ENCODE measurements at regions of chr11 and their contacts with region 1.

Region 1: GRCh38 chr11:72085621-72086351 is 5.1 kb downstream of the LRRC51 start:
- DNase-seq: peak in 3 of 4 experiments; percentile 11 to 33 (median 30)
- ATAC-seq: no peak
- H3K4me3 ChIP-seq: no peak overlapping the region
- H3K27ac ChIP-seq: no peak overlapping the region
- H3K4me1 ChIP-seq: peaks cover 6 to 12% of the 10 kb centered on the region in 2 experiments; a peak in 3 of 5 replicates
- H3K27me3 ChIP-seq: no peaks in the 10 kb centered on the region
- CTCF ChIP-seq: no peak
- EP300 ChIP-seq: no peak
- POLR2A ChIP-seq: no peak
- RAD21 ChIP-seq: no peak

Region 2: GRCh38 chr11:72004936-72005500 is 80.8 kb before region 1 on chr11:
- CTCF ChIA-PET with region 1: no interaction called
- POLR2A ChIA-PET with region 1: no interaction called
- in situ Hi-C with region 1: no loop called
- intact Hi-C with region 1: no loop called
- DNase-seq: no peak
- ATAC-seq: no peak
- H3K4me3 ChIP-seq: no peak overlapping the region
- H3K27ac ChIP-seq: no peak overlapping the region
- H3K4me1 ChIP-seq: peaks cover 7 to 27% of the 10 kb centered on the region in 2 experiments; a peak in 4 of 5 replicates
- H3K27me3 ChIP-seq: no peaks in the 10 kb centered on the region
- CTCF ChIP-seq: no peak
- EP300 ChIP-seq: no peak
- POLR2A ChIP-seq: peak; percentile 12; the same call in 1 of the 2 replicates
- RAD21 ChIP-seq: no peak

Region 3: GRCh38 chr11:72102946-72103753 is 17.4 kb after region 1 on chr11 and contains the start of gene LAMTOR1:
- CTCF ChIA-PET with region 1: no interaction called
- POLR2A ChIA-PET with region 1: interaction called, 21 read pairs
- in situ Hi-C with region 1: no loop called
- intact Hi-C with region 1: loop called (anchors 1 kb)
- DNase-seq: peak; percentile 96 to 100 (median 96)
- ATAC-seq: peak; percentile 96
- H3K4me3 ChIP-seq: peak within 1 kb of the TSS; percentile 77
- H3K27ac ChIP-seq: peak within 1 kb of the TSS; percentile 96
- H3K4me1 ChIP-seq: peaks cover 12 to 39% of the 10 kb centered on the region in 2 experiments
- H3K27me3 ChIP-seq: no peaks in the 10 kb centered on the region
- CTCF ChIP-seq: peak; percentile 49 to 71 (median 66)
- EP300 ChIP-seq: no peak; the same call in none of the 2 replicates
- POLR2A ChIP-seq: peak; percentile 91
- RAD21 ChIP-seq: peak in 1 of 2 experiments; percentile 32; a peak in 3 of 4 replicates
- polyA plus RNA-seq, gene LAMTOR1: 91.1 to 97.5 TPM

Region 4: DNA sequence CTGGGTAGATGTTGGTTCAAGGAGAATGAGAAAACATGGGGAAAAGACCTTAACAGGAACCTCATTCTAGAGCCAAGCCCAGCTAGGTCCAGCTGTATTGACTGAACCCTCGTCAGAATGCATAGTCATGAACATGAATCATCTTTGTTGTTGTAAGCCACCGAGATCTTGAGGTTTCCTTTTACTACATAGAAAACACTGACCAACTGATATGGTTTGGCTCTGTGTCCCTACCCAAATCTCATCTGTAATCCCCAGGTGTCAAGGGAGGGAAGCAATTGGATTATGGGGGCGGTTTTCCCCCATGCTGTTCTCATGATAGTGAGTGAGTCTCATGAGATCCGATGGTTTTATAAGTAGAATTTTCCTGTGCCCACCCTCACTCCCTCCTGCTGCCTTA is 177.6 kb after region 1 on chr11:
- CTCF ChIA-PET with region 1: no interaction called
- POLR2A ChIA-PET with region 1: no interaction called
- in situ Hi-C with region 1: no loop called
- intact Hi-C with region 1: no loop called
- DNase-seq: peak; percentile 29 to 60 (median 38)
- ATAC-seq: peak; percentile 88
- H3K4me3 ChIP-seq: no peak overlapping the region
- H3K27ac ChIP-seq: peak overlapping the region; percentile 51; the same call in 2 of the 3 replicates
- H3K4me1 ChIP-seq: no peaks in the 10 kb centered on the region
- H3K27me3 ChIP-seq: 0 out of 5 replicates have a peak, but pooled peaks cover 0 to 4% of the 10 kb centered on the region in 2 experiments
- CTCF ChIP-seq: no peak
- EP300 ChIP-seq: 0 out of 2 replicates have a peak, but pooled peaks have one; percentile 13
- POLR2A ChIP-seq: no peak
- RAD21 ChIP-seq: no peak

Measured in K562 (cell line).